ENCODE measurements at regions of chr3 and their contacts with region 1.

Region 1: GRCh38 chr3:14203521-14204079 is 25.0 kb downstream of the LSM3 start:
- DNase-seq: peak; percentile 76
- H3K4me3 ChIP-seq: no peak overlapping the region
- H3K27ac ChIP-seq: peak overlapping the region in 1 of 4 donors; percentile 37
- H3K4me1 ChIP-seq: peaks cover 5 to 31% (median 18%) of the 10 kb centered on the region in 4 donors
- H3K27me3 ChIP-seq: no peaks in the 10 kb centered on the region
- CTCF ChIP-seq: peak; percentile 75 to 95 (median 88)
- EP300 ChIP-seq: no peak
- POLR2A ChIP-seq: peak; percentile 9

Region 2: GRCh38 chr3:13801361-13802214 is 402.0 kb before region 1 on chr3:
- in situ Hi-C with region 1: no loop called
- intact Hi-C with region 1: loop called (anchors 5 kb)
- DNase-seq: no peak
- H3K4me3 ChIP-seq: no peak overlapping the region
- H3K27ac ChIP-seq: no peak overlapping the region
- H3K4me1 ChIP-seq: no peaks in the 10 kb centered on the region
- H3K27me3 ChIP-seq: no peaks in the 10 kb centered on the region
- CTCF ChIP-seq: no peak
- EP300 ChIP-seq: no peak
- POLR2A ChIP-seq: no peak

Region 3: GRCh38 chr3:14461748-14462324 is 258.2 kb after region 1 on chr3:
- in situ Hi-C with region 1: loop called in 1 of 4 experiments (anchors 10 kb)
- intact Hi-C with region 1: loop called (anchors 5 kb)
- DNase-seq: peak; percentile 72
- H3K4me3 ChIP-seq: no peak overlapping the region
- H3K27ac ChIP-seq: no peak overlapping the region
- H3K4me1 ChIP-seq: peaks cover 0 to 8% (median 4%) of the 10 kb centered on the region in 4 donors
- H3K27me3 ChIP-seq: no peaks in the 10 kb centered on the region
- CTCF ChIP-seq: peak; percentile 42 to 82 (median 57)
- EP300 ChIP-seq: no peak
- POLR2A ChIP-seq: no peak

Region 4: DNA sequence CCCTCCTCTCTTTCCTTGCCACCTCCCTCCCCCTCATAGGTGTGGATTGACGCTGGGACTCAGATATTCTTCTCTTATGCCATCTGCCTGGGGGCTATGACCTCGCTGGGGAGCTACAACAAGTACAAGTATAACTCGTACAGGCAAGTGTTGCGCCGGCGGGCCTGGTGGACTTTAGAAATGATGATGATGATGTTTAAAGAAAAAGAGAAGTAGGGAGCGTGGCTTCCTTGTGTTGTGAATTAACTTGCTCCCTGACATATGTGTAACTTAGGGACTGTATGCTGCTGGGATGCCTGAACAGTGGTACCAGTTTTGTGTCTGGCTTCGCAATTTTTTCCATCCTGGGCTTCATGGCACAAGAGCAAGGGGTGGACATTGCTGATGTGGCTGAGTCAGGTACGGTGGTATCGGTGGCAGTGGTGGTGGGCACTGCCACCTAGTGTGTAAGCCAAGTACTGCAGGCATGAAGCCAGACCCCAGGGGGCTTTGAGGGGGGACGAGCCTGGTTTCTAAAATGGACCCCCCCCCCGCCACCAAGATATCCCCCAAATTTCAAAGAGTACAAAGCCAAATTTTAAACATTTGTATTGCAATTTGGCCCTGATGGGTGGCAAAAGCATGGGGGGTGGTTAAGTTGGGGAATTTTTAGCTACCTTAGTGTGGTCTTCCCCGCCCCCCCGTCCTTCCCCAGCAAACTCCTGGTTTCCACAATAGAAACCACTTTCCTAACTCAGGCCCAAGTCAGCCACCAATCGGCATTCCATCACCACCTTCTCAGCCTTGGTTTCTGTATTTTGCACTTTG is 264.4 kb after region 1 on chr3:
- in situ Hi-C with region 1: loop called in 1 of 4 experiments (anchors 10 kb)
- intact Hi-C with region 1: loop called (anchors 5 kb)
- DNase-seq: peak; percentile 35
- H3K4me3 ChIP-seq: no peak overlapping the region
- H3K27ac ChIP-seq: no peak overlapping the region
- H3K4me1 ChIP-seq: no peaks in the 10 kb centered on the region
- H3K27me3 ChIP-seq: no peaks in the 10 kb centered on the region
- CTCF ChIP-seq: peak; percentile 89 to 95 (median 93)
- EP300 ChIP-seq: no peak
- POLR2A ChIP-seq: no peak

Region 5: DNA sequence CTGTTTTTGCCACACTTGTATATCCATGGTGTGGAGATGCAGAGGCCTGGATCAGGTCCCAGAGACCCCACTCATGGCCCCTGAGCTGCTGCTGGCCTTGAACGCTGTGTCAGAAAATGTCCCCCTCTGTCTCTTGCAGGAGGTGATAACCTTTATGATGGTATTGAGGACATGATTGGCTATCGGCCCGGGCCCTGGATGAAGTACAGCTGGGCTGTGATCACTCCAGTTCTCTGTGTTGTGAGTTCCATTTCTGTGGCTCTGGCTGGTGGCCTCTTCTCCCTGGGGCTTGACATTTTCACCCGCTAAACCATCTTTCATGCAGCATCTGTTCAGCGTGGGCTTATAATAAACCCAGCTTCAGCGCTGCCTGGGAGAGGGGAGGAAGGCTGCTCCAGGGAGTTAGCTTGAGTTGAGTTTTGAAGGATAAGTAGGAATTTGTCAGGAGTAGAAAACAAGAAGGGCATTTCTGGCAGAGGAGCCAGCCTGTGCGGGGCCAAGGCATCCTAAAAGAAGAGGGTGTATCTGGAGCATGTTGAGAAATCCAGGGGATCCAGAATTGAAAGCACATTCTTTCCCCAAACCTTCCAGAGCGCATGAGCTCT is 275.4 kb after region 1 on chr3:
- in situ Hi-C with region 1: loop called in 1 of 4 experiments (anchors 5 kb)
- intact Hi-C with region 1: no loop called
- DNase-seq: no peak
- H3K4me3 ChIP-seq: no peak overlapping the region
- H3K27ac ChIP-seq: no peak overlapping the region
- H3K4me1 ChIP-seq: no peaks in the 10 kb centered on the region
- H3K27me3 ChIP-seq: no peaks in the 10 kb centered on the region
- CTCF ChIP-seq: no peak
- EP300 ChIP-seq: no peak
- POLR2A ChIP-seq: no peak